Sigmoid colon (tissue), 7 donors: ENCODE measurements at regions of chr14 and their contacts with region 1.

Region 1: DNA sequence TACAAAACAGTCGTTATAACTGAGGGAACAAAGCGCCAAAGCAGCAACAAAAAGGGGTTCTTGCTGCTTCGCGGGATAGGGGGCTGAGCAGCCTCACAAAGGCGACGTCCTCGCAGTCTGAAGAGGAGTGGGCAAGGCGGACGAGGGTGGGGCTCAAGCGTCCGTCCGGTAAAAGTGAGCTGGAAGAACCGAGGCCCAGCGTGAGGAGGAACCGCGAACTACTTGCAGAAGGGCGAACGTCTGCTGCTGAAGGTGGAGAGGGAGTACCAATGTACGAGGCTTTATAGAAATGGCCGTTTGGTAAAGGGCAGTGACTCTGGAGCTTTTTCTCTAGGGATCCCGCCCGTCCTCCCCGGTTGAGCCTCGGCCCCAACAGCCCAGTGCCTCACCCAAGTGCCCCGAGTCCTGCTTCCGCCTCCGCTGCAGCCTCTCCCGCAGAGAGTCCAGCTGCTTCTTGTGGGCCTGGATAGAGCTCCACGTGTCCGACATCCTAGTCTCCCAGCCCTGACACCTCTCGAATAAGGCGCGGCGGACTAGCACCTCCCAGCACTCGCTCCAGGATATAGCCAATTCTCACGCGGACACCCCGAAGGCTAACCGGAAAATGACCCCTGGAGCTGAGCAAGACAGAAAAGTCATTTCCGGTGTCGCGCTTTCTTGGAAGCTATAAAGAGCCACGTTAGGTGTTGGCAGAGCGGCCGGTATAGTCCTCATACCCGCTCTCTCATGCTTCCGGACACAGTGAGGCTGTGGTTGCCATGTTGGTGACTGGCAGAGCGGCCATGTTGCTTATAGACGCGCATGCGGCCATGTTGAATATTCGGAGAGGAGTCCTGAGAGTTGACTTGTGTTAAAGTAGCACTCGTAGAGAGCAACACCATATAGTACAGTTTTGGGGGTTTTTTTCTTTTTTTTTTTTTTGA is at the start of gene METTL3:
- DNase-seq: peak; percentile 99
- H3K4me3 ChIP-seq: peak within 1 kb of the TSS; percentile 54 to 77 (median 72)
- H3K27ac ChIP-seq: peak within 1 kb of the TSS; percentile 81 to 85 (median 84)
- H3K4me1 ChIP-seq: peaks cover 0 to 24% (median 20%) of the 10 kb centered on the region in 4 donors
- H3K27me3 ChIP-seq: no peaks in the 10 kb centered on the region
- CTCF ChIP-seq: no peak
- EP300 ChIP-seq: no peak
- POLR2A ChIP-seq: no peak
- total RNA-seq, gene METTL3: 60.9 to 84.9 (median 75.4) TPM

Region 2: GRCh38 chr14:21476925-21477681 is 33.9 kb before region 1 on chr14 and contains the starts of genes RAB2B and TOX4:
- intact Hi-C with region 1: loop called (anchors 5 kb)
- DNase-seq: peak; percentile 98
- H3K4me3 ChIP-seq: peak within 1 kb of the TSS; percentile 68 to 86 (median 72)
- H3K27ac ChIP-seq: peak within 1 kb of the TSS; percentile 84 to 90 (median 86)
- H3K4me1 ChIP-seq: peaks cover 0 to 27% (median 23%) of the 10 kb centered on the region in 4 donors
- H3K27me3 ChIP-seq: no peaks in the 10 kb centered on the region
- CTCF ChIP-seq: peak; percentile 96 to 100 (median 100)
- EP300 ChIP-seq: no peak
- POLR2A ChIP-seq: peak; percentile 82 to 85
- total RNA-seq, gene RAB2B: 22.7 to 28.5 (median 26.9) TPM
- total RNA-seq, gene TOX4: 40.0 to 71.8 (median 48.5) TPM

Region 3: GRCh38 chr14:21525962-21526671 is 15.1 kb after region 1 on chr14 and contains the start of gene SALL2:
- intact Hi-C with region 1: loop called (anchors 2 kb)
- DNase-seq: peak; percentile 94
- H3K4me3 ChIP-seq: peak within 1 kb of the TSS; percentile 90 to 95 (median 94)
- H3K27ac ChIP-seq: peak within 1 kb of the TSS; percentile 78 to 89 (median 88)
- H3K4me1 ChIP-seq: peaks cover 0 to 18% (median 14%) of the 10 kb centered on the region in 4 donors
- H3K27me3 ChIP-seq: no peaks in the 10 kb centered on the region
- CTCF ChIP-seq: no peak
- EP300 ChIP-seq: no peak
- POLR2A ChIP-seq: peak in 1 of 2 donors; percentile 10
- total RNA-seq, gene SALL2: 12.8 to 15.8 (median 14.1) TPM